Gastrocnemius medialis (tissue), 4 donors: ENCODE measurements at regions of chr3 and their contacts with region 1.

Region 1: DNA sequence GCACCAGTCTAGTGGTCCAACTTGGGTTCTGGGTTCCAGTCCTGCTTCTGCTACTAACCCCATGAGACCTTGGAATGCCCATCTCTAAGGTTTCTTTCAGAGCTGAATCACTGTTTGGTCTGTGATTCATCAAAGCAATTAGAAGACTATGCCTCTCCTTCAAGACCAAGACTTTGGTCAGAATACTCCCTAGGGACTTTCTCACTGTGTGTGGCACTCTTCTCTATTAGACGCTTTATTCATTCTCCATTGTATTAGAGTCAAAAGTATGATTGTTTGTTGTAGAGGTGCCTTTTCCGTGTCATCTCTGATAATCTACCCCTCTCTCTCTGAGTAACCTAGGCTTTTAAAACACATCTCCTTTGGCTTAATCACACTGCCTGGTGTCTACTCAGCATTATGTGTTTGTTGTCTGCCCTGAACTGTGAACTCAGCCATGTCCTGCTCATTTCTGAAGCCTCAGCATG is 90.5 kb downstream of the LPP start:
- DNase-seq: no peak
- ATAC-seq: no peak
- H3K4me3 ChIP-seq: no peak overlapping the region
- H3K27ac ChIP-seq: peak overlapping the region; percentile 84 to 89 (median 86)
- H3K4me1 ChIP-seq: peaks cover 49 to 50% of the 10 kb centered on the region in 2 donors
- H3K27me3 ChIP-seq: no peaks in the 10 kb centered on the region
- CTCF ChIP-seq: no peak
- POLR2A ChIP-seq: no peak

Region 2: DNA sequence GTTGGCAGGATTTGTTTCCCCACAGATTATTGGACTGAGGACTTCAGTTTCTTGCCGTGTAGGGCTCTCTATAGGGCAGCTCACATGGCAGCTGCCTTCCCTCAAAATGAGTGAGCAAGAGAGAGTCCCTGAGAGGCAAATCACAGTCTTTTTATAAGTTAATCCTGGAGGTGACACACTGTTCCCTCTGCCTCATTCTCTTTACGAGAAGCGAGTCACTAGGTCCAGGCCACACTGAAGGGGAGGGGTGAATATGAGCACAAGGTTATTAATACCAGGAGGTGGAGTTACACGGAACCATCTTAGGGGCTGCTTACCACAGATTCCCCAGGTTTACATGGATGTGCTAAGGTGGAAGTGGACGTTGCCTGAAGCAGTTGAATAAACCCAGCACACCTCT is 13.5 kb before region 1 on chr3:
- in situ Hi-C with region 1: no loop called
- intact Hi-C with region 1: loop called (anchors 1 kb)
- DNase-seq: peak; percentile 74 to 88
- ATAC-seq: peak; percentile 96
- H3K4me3 ChIP-seq: peak overlapping the region in 2 of 4 donors; percentile 8 to 31
- H3K27ac ChIP-seq: peak overlapping the region; percentile 87 to 89 (median 88)
- H3K4me1 ChIP-seq: peaks cover 20 to 56% of the 10 kb centered on the region in 2 donors
- H3K27me3 ChIP-seq: no peaks in the 10 kb centered on the region
- CTCF ChIP-seq: no peak
- POLR2A ChIP-seq: peak; percentile 85 to 91

Region 3: DNA sequence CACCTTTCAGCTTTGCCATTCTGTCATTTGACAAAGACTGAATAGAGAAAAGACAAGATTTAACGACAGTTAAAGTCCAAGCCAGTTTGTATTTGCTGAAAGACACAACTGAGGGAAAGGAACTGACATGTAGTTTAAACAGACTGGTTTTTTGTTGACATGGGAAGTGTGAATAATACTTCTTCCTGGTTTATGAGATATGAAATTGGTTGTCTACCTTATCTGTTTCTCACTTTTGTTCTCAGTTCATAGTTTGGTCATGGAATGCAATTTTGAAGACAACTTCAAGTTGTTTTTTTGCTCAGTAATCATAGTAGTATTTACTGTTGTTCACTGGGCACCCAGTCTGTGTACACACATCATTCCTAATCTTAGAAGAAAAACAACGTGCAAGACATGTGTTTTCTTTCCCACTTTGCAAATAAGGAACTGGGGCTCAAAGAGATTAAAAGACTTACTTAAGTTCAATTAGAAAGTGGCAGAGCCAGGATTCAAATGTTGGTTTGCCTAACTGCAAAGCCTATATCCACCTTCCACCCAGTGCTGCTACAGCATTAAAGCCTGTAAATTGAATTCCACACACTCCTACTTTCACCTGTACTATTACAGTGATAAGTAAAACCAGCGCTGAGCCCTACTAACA is 13.1 kb after region 1 on chr3:
- in situ Hi-C with region 1: no loop called
- intact Hi-C with region 1: loop called (anchors 2 kb)
- DNase-seq: no peak
- ATAC-seq: no peak
- H3K4me3 ChIP-seq: no peak overlapping the region
- H3K27ac ChIP-seq: peak overlapping the region; percentile 94 to 99 (median 96)
- H3K4me1 ChIP-seq: peaks cover 38 to 46% of the 10 kb centered on the region in 2 donors
- H3K27me3 ChIP-seq: no peaks in the 10 kb centered on the region
- CTCF ChIP-seq: no peak
- POLR2A ChIP-seq: no peak